ENCODE measurements at regions of chr1 and their contacts with region 1.

Region 1: GRCh38 chr1:35857830-35858229 is 25.2 kb upstream of the AGO1 start:
- DNase-seq: peak; percentile 45
- ATAC-seq: peak; percentile 55
- H3K4me3 ChIP-seq: no peak overlapping the region
- H3K27ac ChIP-seq: no peak overlapping the region
- H3K4me1 ChIP-seq: no peaks in the 10 kb centered on the region
- H3K27me3 ChIP-seq: no peaks in the 10 kb centered on the region
- CTCF ChIP-seq: peak; percentile 58

Region 2: DNA sequence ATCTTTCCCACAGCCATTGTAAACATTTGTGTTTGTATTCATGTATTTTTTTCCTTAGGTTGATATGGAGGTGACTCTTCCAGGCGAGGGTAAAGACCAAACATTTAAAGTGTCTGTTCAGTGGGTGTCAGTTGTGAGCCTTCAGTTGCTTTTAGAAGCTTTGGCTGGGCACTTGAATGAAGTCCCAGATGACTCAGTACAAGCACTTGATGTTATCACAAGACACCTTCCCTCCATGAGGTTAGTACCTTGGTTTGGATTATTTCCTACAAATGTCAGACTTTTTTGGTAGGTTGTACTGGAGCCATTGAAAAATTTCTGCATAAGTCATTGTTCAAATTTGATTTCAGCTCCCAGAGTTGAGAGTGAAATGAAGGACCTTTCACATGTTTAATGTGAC is 32.6 kb before region 1 on chr1:
- CTCF ChIA-PET with region 1: no interaction called
- POLR2A ChIA-PET with region 1: no interaction called
- intact Hi-C with region 1: no loop called
- DNase-seq: no peak
- ATAC-seq: no peak; the same call in 1 of the 2 replicates
- H3K4me3 ChIP-seq: no peak overlapping the region
- H3K27ac ChIP-seq: no peak overlapping the region
- H3K4me1 ChIP-seq: no peaks in the 10 kb centered on the region
- H3K27me3 ChIP-seq: no peaks in the 10 kb centered on the region
- CTCF ChIP-seq: no peak

Region 3: GRCh38 chr1:36088575-36089443 is 231.0 kb after region 1 on chr1 and contains the start of gene ADPRS:
- CTCF ChIA-PET with region 1: no interaction called
- POLR2A ChIA-PET with region 1: no interaction called
- intact Hi-C with region 1: loop called (anchors 5 kb)
- DNase-seq: peak; percentile 88
- ATAC-seq: peak; percentile 91
- H3K4me3 ChIP-seq: peak within 1 kb of the TSS; percentile 99
- H3K27ac ChIP-seq: peak within 1 kb of the TSS; percentile 50
- H3K4me1 ChIP-seq: peaks cover 13% of the 10 kb centered on the region; the same call in 1 of the 2 replicates
- H3K27me3 ChIP-seq: no peaks in the 10 kb centered on the region
- CTCF ChIP-seq: peak; percentile 95
- total RNA-seq, gene ADPRS: 75.9 and 83.0 TPM in 2 replicates

Measured in PC-3 (cell line).